OCI-LY7 (cell line): ENCODE measurements at regions of chr19 and their contacts with region 1.

Region 1: GRCh38 chr19:17784201-17785008 is 10.5 kb upstream of the B3GNT3 start:
- DNase-seq: peak; percentile 73
- H3K4me3 ChIP-seq: no peak overlapping the region
- H3K27ac ChIP-seq: no peak overlapping the region
- H3K4me1 ChIP-seq: no peaks in the 10 kb centered on the region
- CTCF ChIP-seq: peak; percentile 85

Region 2: DNA sequence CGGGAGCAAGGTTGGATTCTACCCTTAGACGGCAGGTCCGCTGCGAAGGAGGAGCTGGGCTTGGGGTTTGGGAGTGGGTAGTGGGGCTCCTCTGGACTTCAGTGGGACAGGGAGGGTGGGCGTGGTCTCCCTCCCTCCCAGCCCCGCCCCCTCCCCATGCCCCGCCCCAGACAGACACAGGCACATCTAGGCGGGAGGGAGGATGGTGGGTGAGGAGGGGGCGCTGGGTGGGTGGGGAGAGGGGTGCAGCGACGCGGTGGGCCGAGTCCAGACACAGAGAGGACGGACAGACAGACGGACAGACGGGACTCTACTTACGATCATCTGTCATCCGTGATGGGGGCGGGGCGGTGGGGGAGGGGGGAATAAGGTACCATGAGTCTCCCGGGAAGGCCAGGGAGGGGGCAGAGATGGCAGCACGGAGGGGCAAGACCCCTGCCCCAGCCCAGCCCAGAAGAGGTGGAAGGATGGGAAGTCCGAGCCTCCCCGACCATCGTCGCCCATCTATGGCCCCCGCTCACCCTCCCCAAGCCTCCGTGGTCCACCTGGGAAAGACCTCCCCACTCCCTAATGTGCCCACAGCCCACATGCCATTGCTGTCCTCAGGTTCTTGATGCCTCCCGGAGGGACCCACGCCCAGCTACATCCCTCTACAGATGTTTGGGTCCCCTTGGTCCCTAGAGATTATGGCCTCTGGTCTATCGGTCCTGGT is 161.0 kb before region 1 on chr19:
- CTCF ChIA-PET with region 1: no interaction called
- POLR2A ChIA-PET with region 1: no interaction called
- intact Hi-C with region 1: no loop called
- DNase-seq: no peak
- H3K4me3 ChIP-seq: no peak overlapping the region
- H3K27ac ChIP-seq: no peak overlapping the region
- H3K4me1 ChIP-seq: peaks cover 15% of the 10 kb centered on the region
- CTCF ChIP-seq: no peak

Region 3: DNA sequence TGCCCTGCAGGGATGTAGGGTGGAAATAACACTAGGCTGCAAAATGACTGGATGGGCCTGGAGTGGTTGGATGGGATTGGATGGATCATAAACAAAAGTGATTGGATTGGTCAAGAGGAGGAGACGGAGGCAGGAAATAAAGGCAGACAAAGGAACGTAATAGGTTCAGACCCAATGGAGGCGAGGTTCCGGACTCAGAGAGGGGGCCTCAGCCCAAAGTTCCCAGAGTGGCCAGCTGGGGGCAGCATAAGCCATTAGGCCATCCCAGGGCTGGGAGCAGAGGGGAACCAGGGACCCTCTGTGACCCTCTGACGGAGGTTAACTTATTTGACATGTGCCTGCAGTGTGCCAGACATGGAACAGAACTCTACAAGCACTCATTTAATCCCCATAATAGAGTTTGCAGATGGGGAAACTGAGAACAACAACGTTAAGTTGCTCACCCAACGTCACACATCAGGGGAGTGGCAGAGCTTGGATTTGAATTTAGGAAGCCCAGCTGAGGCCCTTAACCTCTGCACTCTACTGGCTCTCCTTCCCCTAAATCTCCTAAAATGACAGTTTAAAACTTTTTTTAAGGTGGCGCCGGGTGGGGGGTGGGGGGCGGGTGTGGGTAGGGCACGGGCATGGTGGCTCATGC is 80.5 kb before region 1 on chr19:
- CTCF ChIA-PET with region 1: no interaction called
- POLR2A ChIA-PET with region 1: no interaction called
- intact Hi-C with region 1: loop called (anchors 1 kb)
- DNase-seq: peak; percentile 75
- H3K4me3 ChIP-seq: no peak overlapping the region
- H3K27ac ChIP-seq: no peak overlapping the region
- H3K4me1 ChIP-seq: no peaks in the 10 kb centered on the region
- CTCF ChIP-seq: peak; percentile 98

Region 4: DNA sequence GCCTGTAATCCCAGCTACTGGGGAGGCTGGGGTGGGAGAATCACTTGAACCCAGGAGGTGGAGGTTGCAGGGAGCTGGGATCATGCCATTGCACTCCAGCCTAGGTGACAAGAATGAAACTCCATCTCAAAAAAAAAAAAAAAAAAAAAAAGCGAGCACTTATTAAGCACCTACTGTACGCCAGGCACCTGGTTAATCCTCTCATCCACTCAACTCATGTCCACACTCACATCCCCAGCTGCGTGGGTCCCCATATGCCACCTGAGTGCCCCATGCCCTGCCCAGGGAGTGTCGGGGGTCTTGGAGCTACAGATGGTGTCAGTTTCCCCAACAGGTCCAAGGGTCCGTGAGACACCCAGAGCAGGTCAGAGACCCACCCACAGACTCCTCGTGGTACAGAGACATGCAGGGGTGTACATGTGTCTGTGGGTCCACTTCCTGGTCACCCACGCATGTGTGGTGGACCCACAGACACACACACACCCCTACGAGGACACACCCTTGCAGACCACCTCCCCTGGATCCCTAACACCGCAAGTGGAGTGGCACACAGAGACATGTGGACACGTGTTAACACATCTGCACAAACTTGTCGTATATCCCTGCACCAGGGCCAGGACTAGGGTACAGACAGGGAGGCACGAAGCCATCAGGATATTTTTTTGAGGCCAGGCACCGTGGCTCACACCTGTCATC is 33.4 kb after region 1 on chr19:
- CTCF ChIA-PET with region 1: no interaction called
- POLR2A ChIA-PET with region 1: no interaction called
- intact Hi-C with region 1: no loop called
- DNase-seq: no peak
- H3K4me3 ChIP-seq: no peak overlapping the region
- H3K27ac ChIP-seq: no peak overlapping the region
- H3K4me1 ChIP-seq: no peaks in the 10 kb centered on the region
- CTCF ChIP-seq: no peak